Endothelial cell of umbilical vein (primary cell): ENCODE measurements at regions of chr22 and their contacts with region 1.

Region 1: DNA sequence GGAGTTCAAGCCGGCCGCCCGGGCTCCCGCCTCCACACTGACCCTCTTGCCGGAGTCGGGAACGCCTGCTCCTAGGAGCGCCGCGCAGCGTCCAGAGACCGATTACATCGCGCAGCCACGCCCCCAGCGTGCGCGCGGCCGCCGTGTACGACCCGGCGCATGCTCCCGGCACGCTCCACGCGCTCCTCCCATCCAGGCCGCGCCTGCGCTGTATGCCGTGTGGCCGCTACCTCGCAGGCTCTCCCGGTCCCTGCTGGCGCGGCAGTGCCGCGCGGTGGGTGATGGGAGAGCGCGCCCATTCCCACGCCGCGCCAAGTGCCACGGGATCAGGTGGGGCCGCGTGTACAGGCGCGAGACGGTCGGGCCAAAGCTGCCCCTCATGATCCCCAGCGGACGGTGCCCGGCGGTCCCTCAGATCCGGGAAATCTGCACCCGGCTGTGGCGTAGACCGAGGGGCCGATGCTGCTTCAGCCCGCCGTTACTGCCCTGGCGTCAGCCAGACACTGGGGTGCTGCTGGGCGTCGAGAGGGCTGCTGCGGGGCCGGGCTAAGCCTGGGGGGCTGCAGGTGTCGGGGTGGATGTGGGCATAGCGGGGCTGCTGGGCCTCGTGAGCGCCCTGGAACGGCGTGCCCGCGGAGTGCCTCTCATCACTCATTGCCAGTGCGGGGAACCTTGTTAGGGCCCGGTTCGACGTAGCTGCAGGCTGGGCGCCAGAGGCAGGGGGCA is at the starts of genes GNB1L and RTL10:
- DNase-seq: peak; percentile 98
- H3K4me3 ChIP-seq: peak within 1 kb of the TSS; percentile 78 to 97 (median 88)
- H3K27ac ChIP-seq: peak within 1 kb of the TSS; percentile 65
- H3K4me1 ChIP-seq: peaks cover 32% of the 10 kb centered on the region
- H3K27me3 ChIP-seq: no peaks in the 10 kb centered on the region
- CTCF ChIP-seq: no peak
- POLR2A ChIP-seq: peak; percentile 98
- total RNA-seq, gene GNB1L: 5.9 and 11.2 TPM in 2 replicates
- total RNA-seq, gene RTL10: 31.9 and 32.1 TPM in 2 replicates

Region 2: GRCh38 chr22:19656541-19657251 is 198.2 kb before region 1 on chr22:
- CTCF ChIA-PET with region 1: no interaction called
- POLR2A ChIA-PET with region 1: no interaction called
- dilution Hi-C with region 1: no loop called
- intact Hi-C with region 1: no loop called
- DNase-seq: no peak
- H3K4me3 ChIP-seq: no peak overlapping the region
- H3K27ac ChIP-seq: no peak overlapping the region
- H3K4me1 ChIP-seq: no peaks in the 10 kb centered on the region
- H3K27me3 ChIP-seq: peaks cover 0 to 4% of the 10 kb centered on the region in 2 experiments
- CTCF ChIP-seq: no peak
- POLR2A ChIP-seq: no peak

Region 3: GRCh38 chr22:19756288-19757128 is 98.4 kb before region 1 on chr22:
- CTCF ChIA-PET with region 1: interaction called, 4 read pairs
- POLR2A ChIA-PET with region 1: no interaction called
- dilution Hi-C with region 1: no loop called
- intact Hi-C with region 1: loop called (anchors 5 kb)
- DNase-seq: peak; percentile 26
- H3K4me3 ChIP-seq: no peak overlapping the region
- H3K27ac ChIP-seq: no peak overlapping the region
- H3K4me1 ChIP-seq: peaks cover 9% of the 10 kb centered on the region
- H3K27me3 ChIP-seq: peaks cover 29 to 60% of the 10 kb centered on the region in 2 experiments
- CTCF ChIP-seq: peak; percentile 26 to 56
- POLR2A ChIP-seq: no peak

Region 4: DNA sequence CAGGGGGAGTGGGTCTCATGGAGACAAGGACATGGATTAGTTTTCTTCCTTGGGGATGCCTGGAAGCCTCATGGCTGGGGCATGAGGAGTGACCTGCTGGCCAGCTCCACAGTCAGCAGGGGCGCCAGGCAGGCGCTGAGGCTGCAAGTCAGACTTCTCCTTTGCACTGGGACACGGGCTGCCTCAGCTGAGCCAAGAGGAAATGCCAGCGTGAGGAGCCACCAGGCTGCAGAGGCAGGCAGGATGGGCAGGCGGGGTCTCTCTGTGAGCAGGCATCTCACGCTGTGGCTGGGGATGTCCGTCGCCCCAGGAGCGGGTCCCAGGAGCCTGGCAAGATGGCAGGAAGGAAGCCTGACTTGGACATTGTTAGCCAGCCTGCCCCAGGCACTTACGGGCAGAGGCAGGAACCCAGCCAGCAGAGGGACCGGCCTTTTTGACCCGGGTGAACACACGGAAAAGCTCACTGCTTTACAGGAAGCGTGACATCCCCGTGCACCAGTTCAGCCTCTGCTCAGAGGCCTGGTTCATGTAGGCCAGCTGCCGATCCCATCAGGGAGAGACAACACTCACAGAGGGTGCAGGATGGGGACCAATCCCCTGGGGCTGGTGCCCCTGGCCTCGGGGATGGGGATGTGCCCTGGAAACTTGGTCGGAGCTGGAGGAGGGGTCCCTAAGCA is 10.4 kb before region 1 on chr22:
- CTCF ChIA-PET with region 1: interaction called, 7 read pairs
- POLR2A ChIA-PET with region 1: interaction called, 3 read pairs
- dilution Hi-C with region 1: no loop called
- intact Hi-C with region 1: loop called (anchors 1 kb)
- DNase-seq: peak; percentile 77
- H3K4me3 ChIP-seq: no peak overlapping the region
- H3K27ac ChIP-seq: peak overlapping the region; percentile 80
- H3K4me1 ChIP-seq: peaks cover 32% of the 10 kb centered on the region
- H3K27me3 ChIP-seq: no peaks in the 10 kb centered on the region
- CTCF ChIP-seq: peak; percentile 17 to 39
- POLR2A ChIP-seq: no peak

Region 5: GRCh38 chr22:19868773-19869471 is 14.0 kb after region 1 on chr22:
- CTCF ChIA-PET with region 1: interaction called, 13 read pairs
- POLR2A ChIA-PET with region 1: interaction called, 3 read pairs
- dilution Hi-C with region 1: no loop called
- intact Hi-C with region 1: loop called (anchors 1 kb)
- DNase-seq: no peak
- H3K4me3 ChIP-seq: no peak overlapping the region
- H3K27ac ChIP-seq: no peak overlapping the region
- H3K4me1 ChIP-seq: peaks cover under 1% of the 10 kb centered on the region
- H3K27me3 ChIP-seq: no peaks in the 10 kb centered on the region
- CTCF ChIP-seq: no peak
- POLR2A ChIP-seq: no peak

Region 6: GRCh38 chr22:19874307-19875060 is 19.5 kb after region 1 on chr22:
- CTCF ChIA-PET with region 1: interaction called, 3 read pairs
- POLR2A ChIA-PET with region 1: interaction called, 3 read pairs
- dilution Hi-C with region 1: no loop called
- intact Hi-C with region 1: loop called (anchors 1 kb)
- DNase-seq: peak; percentile 77
- H3K4me3 ChIP-seq: no peak overlapping the region
- H3K27ac ChIP-seq: peak overlapping the region; percentile 77
- H3K4me1 ChIP-seq: peaks cover 54% of the 10 kb centered on the region
- H3K27me3 ChIP-seq: no peaks in the 10 kb centered on the region
- CTCF ChIP-seq: no peak
- POLR2A ChIP-seq: peak; percentile 35

Region 7: DNA sequence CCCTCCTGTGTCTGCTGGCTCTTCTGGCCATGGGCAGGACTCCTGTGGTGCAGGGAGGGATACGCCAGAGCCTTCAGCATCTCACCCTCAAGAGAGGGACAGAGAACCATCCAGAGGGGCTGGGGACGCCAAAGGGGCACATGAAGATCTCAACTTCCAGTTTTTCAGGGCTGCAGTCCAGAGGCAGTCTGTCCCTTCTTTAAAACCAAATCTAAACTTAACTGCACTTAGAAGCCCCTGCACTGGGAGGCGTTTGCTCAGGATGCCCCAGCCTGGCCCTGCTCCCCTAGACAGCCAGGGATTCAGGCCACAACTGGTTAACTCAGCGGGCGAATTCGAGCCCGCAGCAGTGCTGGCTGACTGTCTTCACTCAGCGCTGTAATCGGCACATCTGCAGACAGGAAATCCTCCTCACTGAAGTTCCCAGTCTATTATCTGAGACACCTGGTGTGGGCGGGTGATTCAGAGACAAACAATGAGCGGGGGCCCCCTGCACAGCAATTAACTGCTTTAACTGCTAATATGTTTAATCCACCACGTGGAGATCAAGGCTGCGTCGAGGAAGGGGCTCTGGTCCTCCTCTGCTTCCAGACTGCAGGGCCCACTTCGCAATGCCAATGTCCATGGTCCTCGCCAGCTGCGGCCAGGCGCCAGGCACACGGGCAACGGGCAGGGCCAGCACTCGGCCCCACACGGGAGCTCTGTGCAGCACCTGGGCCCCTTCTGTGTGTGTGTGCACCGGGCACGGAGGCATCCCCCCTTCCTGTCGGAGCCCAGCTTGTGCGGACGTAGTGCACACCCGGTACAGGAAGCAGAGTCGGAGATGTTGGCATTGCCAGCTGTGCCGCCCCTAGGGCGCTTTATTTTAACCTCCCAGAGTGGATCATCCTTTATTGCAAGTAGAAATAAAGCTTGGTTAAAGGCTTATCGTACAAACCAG is 36.6 kb after region 1 on chr22:
- CTCF ChIA-PET with region 1: interaction called, 3 read pairs
- POLR2A ChIA-PET with region 1: interaction called, 4 read pairs
- dilution Hi-C with region 1: no loop called
- intact Hi-C with region 1: loop called (anchors 1 kb)
- DNase-seq: peak; percentile 90
- H3K4me3 ChIP-seq: no peak overlapping the region
- H3K27ac ChIP-seq: peak overlapping the region; percentile 83
- H3K4me1 ChIP-seq: peaks cover 69% of the 10 kb centered on the region
- H3K27me3 ChIP-seq: no peaks in the 10 kb centered on the region
- CTCF ChIP-seq: no peak
- POLR2A ChIP-seq: peak; percentile 87

Region 8: GRCh38 chr22:19941365-19942082 is 86.6 kb after region 1 on chr22 and contains the starts of genes COMT and TXNRD2:
- CTCF ChIA-PET with region 1: no interaction called
- POLR2A ChIA-PET with region 1: no interaction called
- dilution Hi-C with region 1: no loop called
- intact Hi-C with region 1: loop called (anchors 1 kb)
- DNase-seq: peak; percentile 57
- H3K4me3 ChIP-seq: peak within 1 kb of the TSS; percentile 45 to 86 (median 83)
- H3K27ac ChIP-seq: peak within 1 kb of the TSS; percentile 84
- H3K4me1 ChIP-seq: peaks cover 41% of the 10 kb centered on the region
- H3K27me3 ChIP-seq: no peaks in the 10 kb centered on the region
- CTCF ChIP-seq: no peak
- POLR2A ChIP-seq: peak; percentile 82
- total RNA-seq, gene COMT: 221 and 246 TPM in 2 replicates
- total RNA-seq, gene TXNRD2: 211 and 245 TPM in 2 replicates